ENCODE measurements at regions of chr14 and their contacts with region 1.

Region 1: DNA sequence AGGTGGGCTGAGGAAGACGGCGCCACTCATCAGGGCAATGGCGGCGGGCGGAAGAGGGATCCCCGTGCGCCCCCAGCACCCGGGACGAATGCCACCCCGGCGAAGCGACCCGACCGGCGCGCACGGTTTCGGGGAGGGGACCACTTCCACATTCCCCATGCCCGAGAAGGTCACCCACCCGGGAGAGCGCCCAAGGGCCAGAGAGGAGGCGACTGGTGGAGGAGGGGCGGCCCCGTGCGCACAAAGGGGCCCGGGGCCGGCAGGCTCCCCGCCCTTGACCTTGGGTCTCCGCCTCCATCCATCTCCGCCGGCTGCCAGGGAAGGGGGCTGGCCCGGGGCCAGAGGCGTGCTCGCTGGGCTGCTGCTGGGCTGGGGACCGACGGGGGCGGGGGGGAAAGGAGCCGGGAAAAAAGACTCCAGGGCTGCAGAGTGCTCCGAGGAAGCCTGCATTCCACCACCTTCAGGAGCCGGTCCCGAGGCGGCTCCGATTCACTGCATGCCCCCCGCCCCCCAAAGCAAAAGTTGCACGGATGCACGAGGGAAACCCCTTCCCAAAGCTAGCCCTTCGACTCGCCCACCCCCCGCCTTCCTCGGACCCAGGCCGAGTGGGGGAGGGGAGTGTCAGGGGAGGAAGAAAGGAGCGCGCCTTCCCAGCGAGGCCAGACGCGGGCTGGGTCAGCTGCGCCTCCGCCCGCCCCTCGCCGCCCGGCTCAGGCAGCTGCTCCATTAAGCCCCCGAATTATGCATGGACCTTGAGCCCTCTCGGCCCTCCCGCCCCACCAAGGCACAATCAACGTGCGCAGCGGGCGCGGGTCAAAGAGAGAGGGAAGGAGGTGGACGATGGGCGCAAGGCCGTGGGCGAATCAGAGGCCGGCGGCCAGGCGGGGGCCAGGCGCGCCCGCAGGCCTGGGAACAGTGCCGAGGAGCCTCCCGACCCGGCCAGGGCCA is 26.2 kb downstream of the BCL11B start:
- DNase-seq: no peak
- H3K4me3 Mint-ChIP-seq: peak overlapping the region; percentile 81
- H3K27ac Mint-ChIP-seq: peak overlapping the region; percentile 97
- H3K4me1 Mint-ChIP-seq: peaks cover 86% of the 10 kb centered on the region
- H3K27me3 Mint-ChIP-seq: no peaks in the 10 kb centered on the region

Region 2: DNA sequence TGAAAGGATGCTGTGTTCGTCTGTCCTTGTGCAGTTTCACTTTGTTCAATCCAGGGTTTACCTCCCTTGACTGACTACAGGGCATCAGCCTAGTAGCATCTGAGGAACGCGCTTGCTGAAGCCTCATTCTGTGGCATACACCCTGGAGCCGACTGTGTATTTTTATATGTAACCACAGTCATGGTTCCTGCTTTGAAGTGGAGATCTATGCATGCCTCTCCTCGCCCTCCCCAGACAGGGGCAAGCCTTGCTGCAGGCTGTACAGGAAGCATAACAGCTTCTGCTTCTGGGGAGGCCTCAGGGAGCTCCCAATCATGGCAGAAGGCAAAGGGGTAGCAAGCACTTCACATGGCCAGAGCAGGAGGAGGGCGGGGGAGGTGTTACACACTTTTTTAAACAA is 236.0 kb before region 1 on chr14:
- CTCF ChIA-PET with region 1: no interaction called
- DNase-seq: peak; percentile 26
- H3K4me3 Mint-ChIP-seq: no peak overlapping the region
- H3K27ac Mint-ChIP-seq: peak overlapping the region; percentile 16
- H3K4me1 Mint-ChIP-seq: peaks cover 12% of the 10 kb centered on the region
- H3K27me3 Mint-ChIP-seq: peaks cover 11% of the 10 kb centered on the region

Region 3: DNA sequence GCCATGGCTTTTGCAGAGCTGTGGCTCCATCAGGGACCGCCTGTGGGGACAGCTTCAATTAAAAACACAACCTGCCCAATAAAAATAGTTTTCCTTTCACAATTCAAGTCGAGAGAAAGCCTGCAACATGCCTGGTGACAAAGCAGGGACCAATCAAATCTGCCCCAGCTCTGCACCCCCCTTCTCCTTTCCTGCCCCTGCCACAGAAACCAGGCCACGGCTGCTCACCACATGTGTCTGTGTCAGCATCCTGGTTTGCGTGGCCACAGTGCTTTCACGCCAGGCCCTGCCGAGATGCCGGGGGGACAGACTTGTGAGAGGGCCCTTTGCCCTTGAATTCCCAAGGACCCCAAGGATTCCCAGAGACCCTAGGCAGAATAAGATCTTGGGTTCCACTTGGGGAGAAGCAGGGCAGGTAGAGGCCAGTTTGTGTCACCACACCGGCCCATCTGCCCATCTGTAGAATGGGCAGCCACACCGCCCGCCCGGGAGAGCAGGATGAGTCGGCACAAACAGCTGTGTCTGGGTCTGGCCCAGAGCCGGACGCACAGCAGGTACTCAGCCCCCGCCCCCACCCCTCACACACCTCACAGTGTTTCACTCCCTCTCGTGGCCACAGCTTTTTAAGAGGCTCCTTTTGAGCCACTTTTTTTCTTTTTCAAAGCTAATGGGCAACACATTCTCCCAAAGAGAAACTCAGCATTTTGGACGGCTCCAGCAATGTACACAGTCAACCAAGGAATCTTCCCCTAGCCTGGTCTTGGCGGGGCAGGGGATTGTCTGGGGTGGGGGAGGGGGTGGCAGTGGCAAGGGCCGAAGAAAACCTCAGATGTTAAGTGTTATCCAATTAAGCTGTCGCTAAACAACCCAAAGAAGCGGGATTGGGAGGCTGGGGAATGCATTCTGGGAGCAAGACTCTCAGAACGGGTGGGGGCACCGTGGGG is 15.4 kb before region 1 on chr14:
- CTCF ChIA-PET with region 1: interaction called, 25 read pairs
- DNase-seq: peak; percentile 93
- H3K4me3 Mint-ChIP-seq: peak overlapping the region; percentile 74
- H3K27ac Mint-ChIP-seq: peak overlapping the region; percentile 99
- H3K4me1 Mint-ChIP-seq: peaks cover 97% of the 10 kb centered on the region
- H3K27me3 Mint-ChIP-seq: peaks cover 4% of the 10 kb centered on the region

Region 4: DNA sequence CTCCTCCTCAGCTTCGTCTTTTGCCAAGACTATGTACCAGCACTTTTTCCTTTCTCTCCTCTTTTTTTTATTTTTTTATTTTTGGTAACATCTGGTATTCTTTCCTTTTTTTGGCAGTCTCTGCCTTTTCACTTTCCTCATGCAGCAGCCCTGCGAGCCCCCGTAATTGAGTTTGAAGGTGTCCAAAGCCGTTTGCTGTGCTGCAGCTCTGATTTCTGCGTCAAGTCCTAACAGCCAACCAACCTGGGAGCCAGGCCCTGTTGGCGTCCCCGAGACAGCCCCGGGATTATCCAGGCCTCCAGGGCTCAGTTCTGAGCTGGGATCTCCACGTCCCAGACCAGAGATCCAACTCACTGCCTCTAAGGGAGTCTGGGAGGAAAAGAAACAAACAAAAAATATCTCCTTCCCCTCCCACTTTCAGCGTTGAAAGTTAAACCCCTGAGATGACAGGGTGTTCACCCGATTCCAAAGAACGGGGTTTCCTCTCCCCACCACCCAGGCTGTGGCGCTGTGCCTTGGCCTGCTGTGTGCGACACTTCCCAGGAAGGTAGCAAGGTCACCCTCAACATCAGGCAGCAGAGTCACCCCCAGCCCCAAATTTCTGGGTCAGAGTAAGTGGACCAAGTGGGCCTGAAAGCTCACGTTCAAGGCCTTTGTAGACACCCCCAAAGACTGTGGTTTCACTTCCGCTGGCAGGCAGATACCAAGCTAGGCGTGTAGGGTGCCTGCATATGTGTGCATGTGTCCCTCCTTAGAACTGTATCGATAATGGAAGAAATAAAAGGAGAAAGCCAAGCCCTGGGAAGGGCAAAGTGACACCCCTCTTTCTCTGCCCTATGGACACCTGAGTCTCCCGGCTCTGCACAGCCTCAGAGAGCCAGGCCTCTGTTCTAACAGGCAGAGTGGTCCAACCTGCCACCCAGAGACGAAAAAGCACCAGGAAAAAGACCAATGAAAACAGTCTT is 15.0 kb after region 1 on chr14:
- CTCF ChIA-PET with region 1: interaction called, 65 read pairs
- DNase-seq: peak; percentile 83
- H3K4me3 Mint-ChIP-seq: peak overlapping the region; percentile 92
- H3K27ac Mint-ChIP-seq: peak overlapping the region; percentile 100
- H3K4me1 Mint-ChIP-seq: peaks cover 96% of the 10 kb centered on the region
- H3K27me3 Mint-ChIP-seq: no peaks in the 10 kb centered on the region

Region 5: GRCh38 chr14:99333841-99334635 is 88.2 kb after region 1 on chr14:
- CTCF ChIA-PET with region 1: no interaction called
- DNase-seq: no peak
- H3K4me3 Mint-ChIP-seq: no peak overlapping the region
- H3K27ac Mint-ChIP-seq: no peak overlapping the region
- H3K4me1 Mint-ChIP-seq: no peaks in the 10 kb centered on the region
- H3K27me3 Mint-ChIP-seq: peaks cover 19% of the 10 kb centered on the region

Measured in activated naive CD4-positive, alpha-beta T cell treated with anti-CD3 and anti-CD28 coated beads, Interleukin-2, amount 10 ng/mL, durations not matched to agents 7 days and 5 days (primary cell).